Heart right ventricle (tissue), 16 donors: ENCODE measurements at regions of chr19 and their contacts with region 1.

Region 1: DNA sequence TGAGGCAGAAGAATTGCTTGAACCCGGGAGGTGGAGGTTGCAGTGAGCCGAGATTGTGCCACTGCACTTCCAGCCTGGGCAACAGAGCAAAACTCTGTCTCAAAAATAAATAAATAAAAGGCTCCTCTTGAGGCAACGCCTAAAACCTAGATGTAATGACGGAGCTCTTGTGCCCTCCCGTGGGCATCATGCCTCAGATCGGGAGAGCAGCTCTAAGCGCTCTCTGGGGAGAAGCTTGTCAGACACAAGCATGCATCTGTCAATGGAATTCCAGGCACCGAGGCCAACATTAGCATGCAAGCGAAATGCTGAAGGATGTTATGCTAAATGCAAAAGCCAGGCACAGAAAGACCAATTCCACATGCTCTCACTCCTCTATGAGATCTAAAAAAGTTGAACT is 45.6 kb upstream of the MRI1 start:
- DNase-seq: peak in 1 of 2 donors; percentile 37
- ATAC-seq: peak in 7 of 8 donors; percentile 60 to 84 (median 80)
- H3K4me3 ChIP-seq: no peak overlapping the region
- H3K27ac ChIP-seq: no peak overlapping the region
- H3K4me1 ChIP-seq: no peaks in the 10 kb centered on the region
- H3K27me3 ChIP-seq: peaks cover 0 to 35% (median 5%) of the 10 kb centered on the region in 7 donors
- CTCF ChIP-seq: peak in 8 of 9 donors; percentile 16 to 62 (median 48)

Region 2: GRCh38 chr19:13597640-13598039 is 121.1 kb before region 1 on chr19:
- intact Hi-C with region 1: loop called (anchors 1 to 5 kb)
- DNase-seq: peak in 1 of 2 donors; percentile 48
- ATAC-seq: peak; percentile 68 to 92 (median 78)
- H3K4me3 ChIP-seq: no peak overlapping the region
- H3K27ac ChIP-seq: no peak overlapping the region
- H3K4me1 ChIP-seq: no peaks in the 10 kb centered on the region
- H3K27me3 ChIP-seq: peaks cover 0 to 52% (median 22%) of the 10 kb centered on the region in 7 donors
- CTCF ChIP-seq: peak; percentile 27 to 76 (median 65)

Region 3: GRCh38 chr19:13689085-13689484 is 29.6 kb before region 1 on chr19:
- intact Hi-C with region 1: no loop called
- DNase-seq: no peak
- ATAC-seq: no peak
- H3K4me3 ChIP-seq: no peak overlapping the region
- H3K27ac ChIP-seq: no peak overlapping the region
- H3K4me1 ChIP-seq: no peaks in the 10 kb centered on the region
- H3K27me3 ChIP-seq: peaks cover 0 to 12% (median 0%) of the 10 kb centered on the region in 7 donors
- CTCF ChIP-seq: no peak